Transverse colon (tissue), 4 donors: ENCODE measurements at regions of chr21 and their contacts with region 1.

Region 1: GRCh38 chr21:37039411-37040075 is 33.0 kb downstream of the RIPPLY3 start:
- DNase-seq: no peak
- H3K4me3 ChIP-seq: no peak overlapping the region
- H3K27ac ChIP-seq: no peak overlapping the region
- H3K4me1 ChIP-seq: no peaks in the 10 kb centered on the region
- H3K27me3 ChIP-seq: no peaks in the 10 kb centered on the region
- CTCF ChIP-seq: no peak
- EP300 ChIP-seq: no peak
- POLR2A ChIP-seq: no peak

Region 2: GRCh38 chr21:37153196-37153934 is 113.8 kb after region 1 on chr21:
- in situ Hi-C with region 1: no loop called
- intact Hi-C with region 1: loop called (anchors 5 kb)
- DNase-seq: peak; percentile 58
- H3K4me3 ChIP-seq: no peak overlapping the region
- H3K27ac ChIP-seq: peak overlapping the region; percentile 66 to 83 (median 78)
- H3K4me1 ChIP-seq: peaks cover 18 to 30% (median 20%) of the 10 kb centered on the region in 4 donors
- H3K27me3 ChIP-seq: no peaks in the 10 kb centered on the region
- CTCF ChIP-seq: no peak
- EP300 ChIP-seq: no peak
- POLR2A ChIP-seq: no peak

Region 3: GRCh38 chr21:37208056-37208721 is 168.6 kb after region 1 on chr21:
- in situ Hi-C with region 1: no loop called
- intact Hi-C with region 1: no loop called
- DNase-seq: peak; percentile 51
- H3K4me3 ChIP-seq: no peak overlapping the region
- H3K27ac ChIP-seq: no peak overlapping the region
- H3K4me1 ChIP-seq: peaks cover 0 to 13% (median 7%) of the 10 kb centered on the region in 4 donors
- H3K27me3 ChIP-seq: no peaks in the 10 kb centered on the region
- CTCF ChIP-seq: no peak
- EP300 ChIP-seq: no peak
- POLR2A ChIP-seq: no peak

Region 4: GRCh38 chr21:37297364-37297763 is 257.8 kb after region 1 on chr21:
- in situ Hi-C with region 1: no loop called
- intact Hi-C with region 1: no loop called
- DNase-seq: no peak
- H3K4me3 ChIP-seq: no peak overlapping the region
- H3K27ac ChIP-seq: no peak overlapping the region
- H3K4me1 ChIP-seq: no peaks in the 10 kb centered on the region
- H3K27me3 ChIP-seq: no peaks in the 10 kb centered on the region
- CTCF ChIP-seq: no peak
- EP300 ChIP-seq: no peak
- POLR2A ChIP-seq: no peak

Region 5: GRCh38 chr21:38831526-38832467 is 1792.3 kb after region 1 on chr21:
- in situ Hi-C with region 1: no loop called
- intact Hi-C with region 1: no loop called
- DNase-seq: peak; percentile 78
- H3K4me3 ChIP-seq: no peak overlapping the region
- H3K27ac ChIP-seq: peak overlapping the region; percentile 43 to 75 (median 62)
- H3K4me1 ChIP-seq: peaks cover 0 to 17% (median 10%) of the 10 kb centered on the region in 4 donors
- H3K27me3 ChIP-seq: no peaks in the 10 kb centered on the region
- CTCF ChIP-seq: no peak
- EP300 ChIP-seq: peak; percentile 32
- POLR2A ChIP-seq: no peak